Sciatic nerve (tissue), 2 donors: ENCODE measurements at regions of chr21 and their contacts with region 1.

Region 1: GRCh38 chr21:39531832-39532231 is 80.1 kb downstream of the SH3BGR start:
- DNase-seq: no peak
- ATAC-seq: no peak

Region 2: GRCh38 chr21:39483924-39484323 is 47.9 kb before region 1 on chr21:
- intact Hi-C with region 1: loop called (anchors 1 kb)
- DNase-seq: no peak
- ATAC-seq: no peak